A549 (cell line): ENCODE measurements at regions of chr4 and their contacts with region 1.

Region 1: DNA sequence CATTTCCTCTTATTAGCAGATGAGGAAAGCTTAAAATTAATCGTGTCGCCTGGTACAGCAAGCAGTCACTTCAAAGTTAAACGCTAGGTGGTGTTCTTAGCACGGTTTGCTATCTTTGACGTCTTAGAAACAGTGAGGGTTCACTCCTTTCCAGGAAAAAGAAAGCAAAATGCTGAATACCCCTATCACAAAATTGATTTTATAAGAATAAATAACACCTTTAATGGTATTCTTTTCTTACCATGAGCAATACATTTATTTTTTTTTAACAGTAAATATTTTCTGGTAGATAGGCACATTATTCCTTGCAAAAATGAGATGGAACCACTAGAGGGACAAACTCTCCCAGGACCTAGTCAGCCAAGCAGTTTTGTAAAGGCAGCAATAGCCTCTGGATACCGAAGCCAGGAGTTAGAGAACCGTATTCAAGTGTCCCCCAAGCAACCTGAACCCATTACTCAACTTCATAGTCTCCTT is 153.9 kb downstream of the KDR start:
- DNase-seq: peak; percentile 28 to 29
- ATAC-seq: peak; percentile 74 to 85; a peak in 4 of 6 replicates
- H3K4me3 ChIP-seq: no peak overlapping the region
- H3K27ac ChIP-seq: no peak overlapping the region
- H3K4me1 ChIP-seq: no peaks in the 10 kb centered on the region
- CTCF ChIP-seq: peak; percentile 83
- EP300 ChIP-seq: no peak
- POLR2A ChIP-seq: no peak
- RAD21 ChIP-seq: peak; percentile 58 to 78

Region 2: DNA sequence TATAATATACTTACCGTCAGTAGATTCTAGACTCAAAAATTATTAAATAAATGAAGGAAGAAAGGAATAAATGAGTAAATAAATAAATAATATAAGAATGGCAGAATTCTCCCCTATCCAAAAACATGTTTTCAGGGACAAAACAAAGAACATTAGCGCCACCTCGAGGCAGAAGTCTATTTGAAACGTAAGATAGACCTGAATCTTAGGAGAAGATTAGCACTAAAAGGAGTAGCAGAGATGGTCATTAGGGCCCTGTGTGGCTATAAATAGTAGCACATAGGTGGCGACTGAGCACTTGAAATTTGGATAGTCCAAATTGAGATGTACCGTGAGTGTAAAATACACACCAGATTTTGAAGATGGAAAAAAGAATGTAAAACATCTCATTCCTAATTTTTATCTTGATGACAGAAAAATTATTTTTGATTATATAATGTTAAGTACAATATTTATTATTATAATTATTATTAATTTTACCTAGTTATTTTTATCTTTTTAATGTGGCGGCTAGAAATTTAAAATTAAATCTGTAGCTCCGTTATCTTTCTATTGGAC is 350.3 kb after region 1 on chr4:
- CTCF ChIA-PET with region 1: interaction called, 48 read pairs
- POLR2A ChIA-PET with region 1: no interaction called
- DNase-seq: peak; percentile 25 to 73
- ATAC-seq: peak; percentile 62 to 64; a peak in 4 of 6 replicates
- H3K4me3 ChIP-seq: no peak overlapping the region
- H3K27ac ChIP-seq: no peak overlapping the region
- H3K4me1 ChIP-seq: no peaks in the 10 kb centered on the region
- CTCF ChIP-seq: peak; percentile 59
- EP300 ChIP-seq: no peak
- POLR2A ChIP-seq: no peak
- RAD21 ChIP-seq: peak; percentile 67 to 73